CD8-positive, alpha-beta T cell (primary cell): ENCODE measurements at regions of chr3 and their contacts with region 1.

Region 1: DNA sequence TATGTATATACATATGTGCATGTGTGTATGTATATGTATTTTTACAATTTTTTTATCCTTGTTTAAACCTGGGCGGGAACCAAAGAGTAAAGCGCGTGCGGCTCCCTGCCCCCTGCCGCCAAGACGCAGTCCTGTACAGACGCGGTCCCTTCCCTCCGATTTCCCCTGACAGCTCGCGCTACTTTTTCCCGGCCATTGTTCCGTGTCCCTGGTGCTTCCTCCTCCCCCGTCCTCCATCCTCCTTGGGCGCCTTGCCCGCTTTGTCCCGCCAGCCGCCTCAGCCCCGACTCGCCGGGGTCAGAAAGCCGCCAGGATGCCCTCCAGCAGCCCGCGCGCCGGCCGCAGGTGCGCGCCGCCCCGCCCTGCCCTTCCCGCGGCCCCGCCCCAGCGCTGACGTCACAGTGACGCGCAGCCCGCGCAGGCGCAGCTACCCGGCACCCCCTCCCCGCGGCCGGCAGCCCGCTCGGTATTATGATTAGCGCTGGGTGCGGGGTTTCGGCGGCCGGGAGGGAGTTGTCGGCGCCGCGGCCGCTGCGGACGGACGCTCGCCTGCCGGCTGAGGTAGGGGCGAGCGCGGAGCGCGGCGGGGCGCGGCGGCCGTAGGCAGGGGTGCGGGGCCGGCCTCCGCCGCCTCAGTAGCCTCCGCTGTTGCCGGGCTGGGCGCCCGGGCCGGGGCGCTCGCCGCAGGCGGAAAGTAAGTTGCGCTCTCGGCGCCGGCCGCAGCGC is at the start of gene SNRK:
- DNase-seq: peak; percentile 86 to 99 (median 93)
- ATAC-seq: peak; percentile 84
- H3K4me3 ChIP-seq: peak within 1 kb of the TSS; percentile 76 to 82
- H3K4me3 Mint-ChIP-seq: peak within 1 kb of the TSS; percentile 99
- H3K27ac ChIP-seq: peak within 1 kb of the TSS; percentile 87 to 91
- H3K27ac Mint-ChIP-seq: peak within 1 kb of the TSS; percentile 100
- H3K4me1 ChIP-seq: peaks cover 27% of the 10 kb centered on the region
- H3K4me1 Mint-ChIP-seq: peaks cover 31% of the 10 kb centered on the region
- H3K27me3 ChIP-seq: no peaks in the 10 kb centered on the region
- H3K27me3 Mint-ChIP-seq: no peaks in the 10 kb centered on the region
- CTCF ChIP-seq: peak; percentile 48
- total RNA-seq, gene SNRK: 280 to 281 TPM

Region 2: DNA sequence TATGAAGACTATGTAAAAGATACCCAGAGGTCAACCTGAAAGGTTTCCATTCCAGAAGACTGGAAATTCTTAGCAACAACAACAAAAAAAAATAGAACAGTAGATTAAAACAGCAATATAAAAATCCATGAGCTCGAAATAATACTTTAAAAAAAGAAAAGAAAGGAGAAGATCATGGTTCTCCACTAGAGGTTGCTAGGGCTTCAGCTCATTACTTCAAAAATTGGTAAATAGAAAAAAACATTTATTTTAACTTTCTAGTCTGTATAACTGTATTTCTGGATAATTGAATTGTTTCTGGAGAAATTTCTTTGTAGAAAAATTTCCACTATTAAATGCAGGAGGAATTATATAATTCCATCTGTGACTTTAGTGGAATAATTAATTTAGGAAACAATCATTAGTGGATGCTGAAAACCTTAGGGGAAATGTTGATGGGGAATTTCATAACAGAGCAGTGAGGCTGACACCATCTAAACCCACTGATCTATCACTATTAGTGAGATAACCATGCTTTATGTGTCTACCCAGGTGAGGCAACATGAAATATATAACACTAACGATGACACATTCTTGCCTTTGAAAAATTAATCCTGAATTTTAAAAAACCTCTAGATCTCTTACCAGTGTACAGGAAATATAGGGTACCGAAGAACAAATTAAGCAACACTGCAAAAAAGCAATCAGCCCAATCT is 62.5 kb before region 1 on chr3:
- CTCF ChIA-PET with region 1: interaction called, 9 read pairs
- POLR2A ChIA-PET with region 1: interaction called, 4 read pairs
- intact Hi-C with region 1: loop called (anchors 2 kb)
- DNase-seq: peak in 2 of 9 experiments; percentile 50 to 58
- ATAC-seq: peak; percentile 30
- H3K4me3 ChIP-seq: no peak overlapping the region
- H3K4me3 Mint-ChIP-seq: no peak overlapping the region
- H3K27ac ChIP-seq: no peak overlapping the region
- H3K27ac Mint-ChIP-seq: peak overlapping the region; percentile 81
- H3K4me1 ChIP-seq: peaks cover 58% of the 10 kb centered on the region
- H3K4me1 Mint-ChIP-seq: peaks cover 64% of the 10 kb centered on the region
- H3K27me3 ChIP-seq: no peaks in the 10 kb centered on the region
- H3K27me3 Mint-ChIP-seq: no peaks in the 10 kb centered on the region
- CTCF ChIP-seq: peak; percentile 78

Region 3: DNA sequence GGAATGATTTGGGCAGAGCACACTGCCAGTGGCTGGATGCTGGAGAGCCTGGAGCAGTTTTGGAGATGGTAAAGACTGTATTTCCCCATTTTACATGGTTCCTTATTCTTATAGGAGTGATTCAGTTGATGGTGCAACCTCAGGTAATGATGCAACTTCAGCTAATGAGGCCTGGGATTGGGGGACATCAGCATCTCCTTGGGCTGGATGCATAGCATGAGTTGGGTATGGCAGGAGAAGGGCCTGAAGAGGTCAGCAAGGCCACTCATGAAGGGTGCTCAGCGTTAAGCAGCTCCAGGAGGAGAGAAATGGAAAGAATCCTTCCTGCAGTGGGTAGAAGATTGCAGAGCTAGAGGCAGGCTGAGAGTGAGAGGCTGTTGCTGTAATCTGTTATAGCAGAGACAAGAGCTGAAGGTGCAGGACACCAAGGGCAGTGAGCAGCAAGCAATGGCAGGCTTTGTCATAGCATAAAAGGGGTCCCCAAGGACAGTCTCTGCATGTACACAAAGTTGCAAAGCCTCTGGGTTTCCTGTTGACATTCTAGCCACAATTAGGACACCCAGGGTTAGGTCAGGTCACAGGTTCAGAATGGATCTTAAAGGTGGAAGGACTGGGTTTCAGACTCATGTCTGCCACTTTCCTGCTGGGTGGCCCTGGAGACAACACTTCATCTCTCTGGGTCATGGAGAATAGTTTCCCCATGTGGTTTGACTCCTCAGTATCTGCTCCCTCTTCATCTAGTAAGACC is 29.4 kb before region 1 on chr3:
- CTCF ChIA-PET with region 1: no interaction called
- POLR2A ChIA-PET with region 1: interaction called, 12 read pairs
- intact Hi-C with region 1: no loop called
- DNase-seq: peak in 2 of 9 experiments; percentile 18 to 25
- ATAC-seq: peak; percentile 36
- H3K4me3 ChIP-seq: no peak overlapping the region
- H3K4me3 Mint-ChIP-seq: no peak overlapping the region
- H3K27ac ChIP-seq: no peak overlapping the region
- H3K27ac Mint-ChIP-seq: peak overlapping the region; percentile 58
- H3K4me1 ChIP-seq: peaks cover 6% of the 10 kb centered on the region
- H3K4me1 Mint-ChIP-seq: peaks cover 27% of the 10 kb centered on the region
- H3K27me3 ChIP-seq: no peaks in the 10 kb centered on the region
- H3K27me3 Mint-ChIP-seq: no peaks in the 10 kb centered on the region
- CTCF ChIP-seq: no peak

Region 4: GRCh38 chr3:43326891-43327581 is 40.8 kb after region 1 on chr3:
- CTCF ChIA-PET with region 1: no interaction called
- POLR2A ChIA-PET with region 1: interaction called, 5 read pairs
- intact Hi-C with region 1: loop called in 1 of 2 experiments (anchors 5 kb)
- DNase-seq: peak in 1 of 9 experiments; percentile 51
- ATAC-seq: peak; percentile 73
- H3K4me3 ChIP-seq: no peak overlapping the region
- H3K4me3 Mint-ChIP-seq: peak overlapping the region; percentile 54
- H3K27ac ChIP-seq: peak overlapping the region; percentile 1 to 31
- H3K27ac Mint-ChIP-seq: peak overlapping the region; percentile 88
- H3K4me1 ChIP-seq: peaks cover 75% of the 10 kb centered on the region
- H3K4me1 Mint-ChIP-seq: peaks cover 88% of the 10 kb centered on the region
- H3K27me3 ChIP-seq: no peaks in the 10 kb centered on the region
- H3K27me3 Mint-ChIP-seq: no peaks in the 10 kb centered on the region
- CTCF ChIP-seq: no peak

Region 5: DNA sequence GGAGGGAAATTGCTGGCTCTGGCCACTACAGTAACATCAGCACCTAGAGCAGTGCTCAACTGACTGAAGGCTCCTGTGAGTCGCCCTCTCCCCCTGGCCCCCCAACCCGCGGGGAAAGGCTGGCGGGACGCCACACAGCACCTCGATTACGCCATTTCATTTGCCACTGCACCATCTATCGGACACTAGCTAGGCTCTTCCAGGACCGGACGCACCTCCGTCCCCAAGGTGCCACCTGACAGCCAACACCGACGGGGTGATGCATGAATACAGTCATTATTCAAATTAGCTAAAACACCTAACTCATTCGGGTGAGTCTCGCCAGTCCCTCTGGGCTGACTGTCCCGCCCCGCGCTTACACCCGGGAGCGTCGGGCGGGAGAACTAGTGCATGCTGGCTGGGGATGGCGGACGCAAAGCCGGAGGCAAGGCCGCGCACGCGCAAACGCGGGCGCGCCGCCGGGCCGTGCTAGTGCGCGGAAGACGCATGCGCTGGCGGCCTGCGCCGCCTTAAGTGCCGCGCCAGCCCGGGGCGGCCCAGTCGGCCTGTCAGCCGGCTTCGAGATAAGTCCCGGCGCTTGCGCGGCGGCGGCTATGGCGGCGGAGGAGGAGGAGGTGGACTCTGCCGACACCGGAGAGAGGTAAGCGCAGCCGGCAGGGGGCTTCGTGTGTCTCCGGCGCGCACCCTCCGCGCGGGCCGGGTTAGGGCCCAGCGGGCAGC is 404.3 kb after region 1 on chr3 and contains the start of gene ABHD5:
- CTCF ChIA-PET with region 1: no interaction called
- POLR2A ChIA-PET with region 1: no interaction called
- intact Hi-C with region 1: loop called (anchors 5 to 10 kb)
- DNase-seq: peak; percentile 93 to 99 (median 96)
- ATAC-seq: peak; percentile 90
- H3K4me3 ChIP-seq: peak within 1 kb of the TSS; percentile 72 to 77
- H3K4me3 Mint-ChIP-seq: peak within 1 kb of the TSS; percentile 91
- H3K27ac ChIP-seq: peak within 1 kb of the TSS; percentile 62 to 83
- H3K27ac Mint-ChIP-seq: peak within 1 kb of the TSS; percentile 91
- H3K4me1 ChIP-seq: peaks cover 15% of the 10 kb centered on the region
- H3K4me1 Mint-ChIP-seq: peaks cover 32% of the 10 kb centered on the region
- H3K27me3 ChIP-seq: no peaks in the 10 kb centered on the region
- H3K27me3 Mint-ChIP-seq: no peaks in the 10 kb centered on the region
- CTCF ChIP-seq: peak; percentile 44
- total RNA-seq, gene ABHD5: 10.3 to 11.4 TPM